OCI-LY7 (cell line): ENCODE measurements at regions of chr4 and their contacts with region 1.

Region 1: DNA sequence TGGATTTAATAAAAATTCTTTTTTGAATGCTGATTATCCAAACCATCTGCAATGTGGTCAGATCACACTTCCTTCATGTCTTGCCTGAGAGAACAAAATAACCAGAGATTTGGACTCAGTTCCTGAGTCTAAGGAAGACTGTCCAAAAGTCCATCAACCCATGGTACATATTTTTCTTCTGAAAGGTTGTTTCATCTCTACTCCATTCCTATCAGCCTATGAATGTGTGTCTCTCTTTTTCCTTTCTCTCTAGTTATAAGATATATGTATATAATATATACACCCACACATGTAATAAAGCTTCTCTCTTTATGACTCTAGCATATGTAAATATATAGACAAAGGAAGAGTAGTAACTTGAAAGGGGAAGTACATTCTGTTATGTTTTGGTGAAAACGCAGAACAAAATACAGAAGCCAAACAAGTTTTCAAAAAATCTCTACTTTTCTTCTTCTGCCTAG is 226.9 kb downstream of the ARHGAP24 start:
- DNase-seq: peak; percentile 89
- H3K4me3 ChIP-seq: peak overlapping the region; percentile 37
- H3K27ac ChIP-seq: peak overlapping the region; percentile 99
- H3K4me1 ChIP-seq: peaks cover 59% of the 10 kb centered on the region
- CTCF ChIP-seq: no peak

Region 2: GRCh38 chr4:85474818-85475630 is 226.9 kb before region 1 on chr4 and contains the start of gene ARHGAP24:
- CTCF ChIA-PET with region 1: no interaction called
- POLR2A ChIA-PET with region 1: no interaction called
- intact Hi-C with region 1: loop called (anchors 5 kb)
- DNase-seq: peak; percentile 32
- H3K4me3 ChIP-seq: peak within 1 kb of the TSS; percentile 60
- H3K27ac ChIP-seq: no peak within 1 kb of the TSS
- H3K4me1 ChIP-seq: no peaks in the 10 kb centered on the region
- CTCF ChIP-seq: no peak
- total RNA-seq, gene ARHGAP24: 0.75 and 0.88 TPM in 2 replicates

Region 3: DNA sequence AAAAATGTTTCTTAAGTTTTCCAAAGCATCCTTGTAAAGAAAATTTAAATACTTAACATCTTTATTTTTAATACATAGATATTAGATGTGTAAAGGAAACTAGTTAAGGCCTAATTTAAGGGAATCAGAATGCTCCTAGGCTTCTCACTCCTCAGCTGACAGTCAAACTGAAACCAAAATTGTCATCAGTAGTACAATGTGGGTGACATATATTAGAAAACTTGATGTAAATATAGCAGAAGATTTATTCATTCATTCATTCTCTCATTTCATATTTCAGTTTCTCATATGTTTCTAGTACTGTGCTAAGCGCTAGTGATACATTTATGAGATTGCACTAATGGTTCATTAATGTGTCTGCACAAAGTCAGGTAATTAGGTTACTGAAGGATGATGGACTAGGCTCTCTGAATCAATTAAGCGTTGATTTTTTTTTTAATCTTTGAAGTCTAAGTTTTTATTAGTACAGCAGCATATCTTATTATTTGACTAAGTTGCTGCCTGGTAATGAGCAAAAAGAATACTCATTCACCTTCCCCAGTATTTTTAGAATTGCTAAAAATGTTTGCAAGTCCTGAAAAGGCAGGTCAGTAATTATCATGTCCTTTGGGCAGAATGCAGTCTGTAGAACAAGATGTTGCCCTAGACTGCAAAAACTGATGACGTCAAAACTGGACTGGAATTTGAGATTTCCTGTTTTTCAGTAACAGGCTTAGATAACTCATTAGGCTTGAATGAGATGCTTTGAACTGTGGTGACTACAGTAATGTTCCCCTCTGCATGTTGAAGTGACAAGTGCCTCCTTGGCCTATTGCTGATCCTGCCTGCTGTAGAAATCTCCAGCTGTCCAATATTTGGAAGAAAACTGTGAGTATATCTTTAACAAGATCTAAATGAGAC is 98.2 kb before region 1 on chr4:
- CTCF ChIA-PET with region 1: no interaction called
- POLR2A ChIA-PET with region 1: no interaction called
- intact Hi-C with region 1: loop called (anchors 5 kb)
- DNase-seq: peak; percentile 12
- H3K4me3 ChIP-seq: no peak overlapping the region
- H3K27ac ChIP-seq: no peak overlapping the region
- H3K4me1 ChIP-seq: peaks cover 8% of the 10 kb centered on the region
- CTCF ChIP-seq: no peak

Region 4: GRCh38 chr4:85686398-85686797 is 15.5 kb before region 1 on chr4:
- CTCF ChIA-PET with region 1: interaction called, 3 read pairs
- POLR2A ChIA-PET with region 1: interaction called, 12 read pairs
- intact Hi-C with region 1: no loop called
- DNase-seq: peak; percentile 29
- H3K4me3 ChIP-seq: no peak overlapping the region
- H3K27ac ChIP-seq: no peak overlapping the region
- H3K4me1 ChIP-seq: peaks cover 11% of the 10 kb centered on the region
- CTCF ChIP-seq: peak; percentile 52; the same call in 1 of the 2 replicates

Region 5: GRCh38 chr4:85717351-85717750 is 15.5 kb after region 1 on chr4:
- CTCF ChIA-PET with region 1: no interaction called
- POLR2A ChIA-PET with region 1: interaction called, 47 read pairs
- intact Hi-C with region 1: no loop called
- DNase-seq: peak; percentile 24
- H3K4me3 ChIP-seq: no peak overlapping the region
- H3K27ac ChIP-seq: peak overlapping the region; percentile 8
- H3K4me1 ChIP-seq: peaks cover 52% of the 10 kb centered on the region
- CTCF ChIP-seq: no peak

Region 6: DNA sequence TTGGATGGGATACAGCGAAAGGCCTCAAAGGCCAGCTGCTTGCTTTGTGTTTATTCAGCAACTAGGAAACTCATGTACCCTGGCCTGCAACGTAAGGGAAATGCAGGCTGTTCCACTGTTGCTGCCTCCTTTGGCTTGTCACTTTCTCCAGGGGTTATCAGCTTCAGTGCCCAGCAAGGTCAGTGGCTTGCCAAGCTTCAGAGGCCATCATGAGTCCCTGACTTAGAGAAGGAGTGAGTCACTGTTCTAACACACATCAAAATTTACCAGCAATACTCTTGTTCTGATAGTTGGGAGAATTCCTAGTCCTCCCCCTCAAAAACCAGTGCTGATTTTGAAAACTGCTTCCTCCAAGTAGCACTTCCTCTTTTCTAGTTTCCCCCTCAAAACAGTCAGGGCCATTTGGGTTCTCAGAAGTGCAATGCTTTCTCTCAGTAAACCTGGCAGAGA is 23.9 kb after region 1 on chr4:
- CTCF ChIA-PET with region 1: interaction called, 4 read pairs
- POLR2A ChIA-PET with region 1: interaction called, 7 read pairs
- intact Hi-C with region 1: loop called (anchors 1 kb)
- DNase-seq: peak; percentile 85
- H3K4me3 ChIP-seq: peak overlapping the region; percentile 39
- H3K27ac ChIP-seq: peak overlapping the region; percentile 83
- H3K4me1 ChIP-seq: peaks cover 24% of the 10 kb centered on the region
- CTCF ChIP-seq: no peak